Activated naive CD4-positive, alpha-beta T cell treated with anti-CD3 and anti-CD28 coated beads, Interleukin-2, amount 10 ng/mL, durations not matched to agents 7 days and 5 days (primary cell): ENCODE measurements at regions of chr6 and their contacts with region 1.

Region 1: DNA sequence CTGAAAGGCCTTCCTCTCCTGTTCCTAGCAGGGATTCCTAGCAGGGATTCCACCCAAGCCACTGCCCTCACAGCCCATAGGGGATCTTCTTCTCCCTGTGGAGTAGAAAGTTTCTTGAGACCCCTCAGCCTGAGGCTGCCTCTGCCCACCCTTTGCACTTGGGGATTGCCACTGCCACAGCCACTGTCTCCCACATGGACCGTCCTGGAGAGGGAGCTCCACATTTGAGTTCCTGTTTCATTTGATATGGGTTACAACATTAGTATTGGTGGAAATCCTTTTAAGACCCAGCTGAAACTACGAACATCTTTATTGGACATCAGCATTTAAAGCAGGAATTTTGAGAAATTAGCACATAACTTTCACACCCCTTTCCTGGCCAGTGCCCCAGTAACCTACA is 25.6 kb downstream of the HLA-G start:
- DNase-seq: no peak
- H3K4me3 Mint-ChIP-seq: no peak overlapping the region
- H3K27ac Mint-ChIP-seq: no peak overlapping the region
- H3K4me1 Mint-ChIP-seq: peaks cover 22% of the 10 kb centered on the region
- H3K27me3 Mint-ChIP-seq: peaks cover 60% of the 10 kb centered on the region

Region 2: DNA sequence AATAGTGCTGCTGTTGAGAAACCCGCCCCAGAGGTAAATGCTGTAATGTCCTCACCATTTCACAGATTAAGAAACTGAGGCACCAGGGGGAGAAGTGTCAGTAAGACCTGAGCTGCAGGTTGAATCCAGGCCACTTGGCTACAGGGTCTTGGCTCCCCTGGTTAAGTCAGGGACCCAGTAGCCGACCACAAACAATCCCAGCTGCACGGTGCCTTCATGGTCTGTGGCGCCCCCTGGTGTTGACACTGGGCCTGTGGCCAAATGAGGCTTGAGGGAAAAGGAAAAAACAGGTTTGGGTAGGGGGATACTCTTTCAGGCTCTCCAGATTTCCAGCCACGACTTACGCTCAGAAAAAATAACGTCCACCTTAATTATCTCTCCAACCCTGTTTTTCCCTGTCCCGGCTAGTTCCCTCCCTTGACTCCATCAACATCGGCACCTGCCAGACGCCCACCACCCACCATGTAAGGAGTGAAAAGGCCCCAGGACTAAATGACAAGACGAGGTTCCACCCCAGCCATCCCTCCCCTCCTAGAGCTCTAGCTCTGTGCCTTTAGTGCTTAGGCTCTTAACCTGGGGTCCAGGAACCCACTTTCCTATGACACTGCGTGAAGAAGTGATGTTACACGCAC is 160.2 kb after region 1 on chr6:
- CTCF ChIA-PET with region 1: interaction called, 36 read pairs
- DNase-seq: peak; percentile 67
- H3K4me3 Mint-ChIP-seq: no peak overlapping the region
- H3K27ac Mint-ChIP-seq: no peak overlapping the region
- H3K4me1 Mint-ChIP-seq: no peaks in the 10 kb centered on the region
- H3K27me3 Mint-ChIP-seq: peaks cover 24% of the 10 kb centered on the region